ENCODE measurements at regions of chr13 and their contacts with region 1.

Region 1: DNA sequence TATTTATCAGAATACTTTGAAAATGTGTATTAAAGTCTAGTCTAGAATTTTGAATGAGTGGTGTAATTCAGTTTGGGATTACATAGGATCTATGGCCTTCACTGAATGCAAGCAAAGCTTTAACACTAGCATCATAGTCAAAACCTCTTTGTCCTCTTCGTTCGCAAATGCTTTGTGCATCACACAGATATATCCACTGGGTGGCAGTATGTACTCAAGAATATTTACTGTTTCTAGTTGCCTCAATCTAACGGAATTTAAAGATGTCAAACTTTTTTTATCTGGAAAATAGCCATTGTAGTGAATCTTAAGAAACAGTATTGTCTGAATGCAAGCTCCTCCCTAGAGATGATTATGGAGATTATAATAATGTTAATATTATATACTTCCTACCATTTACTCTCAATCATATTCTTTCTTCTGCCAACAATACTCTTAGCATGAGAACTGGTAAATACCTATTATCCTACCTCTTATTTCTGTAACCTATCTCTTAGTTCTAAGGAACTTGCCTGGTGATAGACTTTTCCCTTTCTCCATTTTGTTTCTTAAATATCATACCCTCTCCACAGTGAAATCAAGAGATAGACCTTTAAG is 25.8 kb downstream of the LACC1 start:
- DNase-seq: peak in 7 of 9 donors; percentile 21 to 61 (median 48)
- ATAC-seq: peak; percentile 85
- H3K4me3 ChIP-seq: no peak overlapping the region
- H3K4me3 Mint-ChIP-seq: no peak overlapping the region
- H3K27ac ChIP-seq: no peak overlapping the region
- H3K27ac Mint-ChIP-seq: no peak overlapping the region
- H3K4me1 ChIP-seq: no peaks in the 10 kb centered on the region
- H3K4me1 Mint-ChIP-seq: peaks cover 0 to 6% (median 3%) of the 10 kb centered on the region in 7 donors
- H3K27me3 ChIP-seq: no peaks in the 10 kb centered on the region
- H3K27me3 Mint-ChIP-seq: peaks cover 13 to 35% (median 18%) of the 10 kb centered on the region in 5 donors

Region 2: DNA sequence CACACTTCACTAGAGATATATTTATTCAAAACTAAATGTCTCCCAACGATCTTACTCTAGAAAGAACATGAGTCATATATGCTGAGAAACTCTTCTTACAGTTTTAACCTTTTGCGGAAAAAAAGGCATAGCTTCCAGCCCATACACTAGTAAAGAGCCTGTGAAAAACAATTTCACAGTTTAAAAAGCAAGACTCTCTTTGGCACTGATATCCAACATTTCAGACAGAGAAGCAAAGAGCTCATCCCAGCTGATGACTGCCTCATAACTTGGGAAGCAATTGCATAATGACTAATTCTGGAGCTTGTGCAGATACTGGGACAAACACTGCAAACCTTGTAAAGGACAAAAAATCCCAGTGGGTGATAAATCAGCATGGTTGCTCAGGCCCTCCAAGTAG is 206.8 kb before region 1 on chr13:
- CTCF ChIA-PET with region 1: no interaction called
- POLR2A ChIA-PET with region 1: no interaction called
- intact Hi-C with region 1: no loop called
- DNase-seq: no peak
- ATAC-seq: no peak
- H3K4me3 ChIP-seq: no peak overlapping the region
- H3K4me3 Mint-ChIP-seq: no peak overlapping the region
- H3K27ac ChIP-seq: no peak overlapping the region
- H3K27ac Mint-ChIP-seq: no peak overlapping the region
- H3K4me1 ChIP-seq: no peaks in the 10 kb centered on the region
- H3K4me1 Mint-ChIP-seq: no peaks in the 10 kb centered on the region
- H3K27me3 ChIP-seq: no peaks in the 10 kb centered on the region
- H3K27me3 Mint-ChIP-seq: peaks cover 7 to 36% (median 29%) of the 10 kb centered on the region in 5 donors

Region 3: DNA sequence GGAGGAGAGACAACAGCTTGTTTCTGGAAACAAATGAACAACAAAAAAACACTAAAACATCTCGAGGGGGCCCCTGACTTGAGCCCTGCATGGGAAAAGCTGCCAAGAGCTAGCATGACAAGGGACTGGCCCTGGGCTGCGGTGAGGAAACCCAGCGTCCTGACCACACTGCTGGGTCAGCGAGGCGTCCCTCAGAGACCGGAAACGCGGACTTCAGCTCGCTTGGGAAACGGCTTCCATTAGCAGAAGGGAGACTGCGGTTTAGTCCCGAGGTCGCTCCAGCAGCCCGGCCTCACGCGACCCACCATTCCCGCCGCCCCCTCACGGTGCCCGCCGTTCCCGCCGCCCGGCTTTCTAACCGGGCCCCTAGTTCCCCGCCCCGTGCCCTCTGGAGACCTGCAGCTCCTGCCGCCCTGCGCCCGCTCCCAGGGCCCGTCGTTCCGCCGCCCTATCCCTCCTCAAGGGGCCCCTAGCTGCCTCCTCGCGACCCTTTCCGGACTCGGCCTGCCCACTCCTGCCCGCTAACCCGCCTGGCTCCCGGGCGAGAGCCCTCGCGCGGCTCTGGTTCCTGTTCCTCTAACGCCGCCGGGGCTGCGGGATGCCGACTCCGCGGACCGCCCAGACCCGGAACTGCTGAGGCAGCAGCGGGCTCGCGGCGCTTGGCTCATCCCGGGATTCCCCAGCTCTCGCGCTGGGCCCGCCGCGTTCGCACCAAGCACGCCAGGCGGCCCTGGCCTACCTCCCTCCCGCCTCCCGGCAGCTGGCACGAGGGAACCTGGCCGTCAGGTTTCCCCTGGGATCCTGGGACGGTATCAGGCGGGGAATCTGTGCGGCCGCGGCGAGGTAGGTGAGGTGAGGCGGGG is 26.4 kb before region 1 on chr13 and contains the start of gene CCDC122:
- CTCF ChIA-PET with region 1: interaction called, 4 read pairs
- POLR2A ChIA-PET with region 1: no interaction called
- intact Hi-C with region 1: loop called in 1 of 2 experiments (anchors 1 kb)
- DNase-seq: peak; percentile 44 to 81 (median 65)
- ATAC-seq: peak; percentile 91
- H3K4me3 ChIP-seq: peak within 1 kb of the TSS; percentile 60
- H3K4me3 Mint-ChIP-seq: peak within 1 kb of the TSS; percentile 82 to 93 (median 90)
- H3K27ac ChIP-seq: peak within 1 kb of the TSS; percentile 72
- H3K27ac Mint-ChIP-seq: peak within 1 kb of the TSS; percentile 53 to 90 (median 81)
- H3K4me1 ChIP-seq: peaks cover 0 to 9% of the 10 kb centered on the region in 2 donors
- H3K4me1 Mint-ChIP-seq: peaks cover 15 to 27% (median 23%) of the 10 kb centered on the region in 7 donors
- H3K27me3 ChIP-seq: no peaks in the 10 kb centered on the region
- H3K27me3 Mint-ChIP-seq: peaks cover 0 to 33% (median 3%) of the 10 kb centered on the region in 5 donors
- total RNA-seq, gene CCDC122: 1.1 to 2.3 (median 1.4) TPM

Region 4: DNA sequence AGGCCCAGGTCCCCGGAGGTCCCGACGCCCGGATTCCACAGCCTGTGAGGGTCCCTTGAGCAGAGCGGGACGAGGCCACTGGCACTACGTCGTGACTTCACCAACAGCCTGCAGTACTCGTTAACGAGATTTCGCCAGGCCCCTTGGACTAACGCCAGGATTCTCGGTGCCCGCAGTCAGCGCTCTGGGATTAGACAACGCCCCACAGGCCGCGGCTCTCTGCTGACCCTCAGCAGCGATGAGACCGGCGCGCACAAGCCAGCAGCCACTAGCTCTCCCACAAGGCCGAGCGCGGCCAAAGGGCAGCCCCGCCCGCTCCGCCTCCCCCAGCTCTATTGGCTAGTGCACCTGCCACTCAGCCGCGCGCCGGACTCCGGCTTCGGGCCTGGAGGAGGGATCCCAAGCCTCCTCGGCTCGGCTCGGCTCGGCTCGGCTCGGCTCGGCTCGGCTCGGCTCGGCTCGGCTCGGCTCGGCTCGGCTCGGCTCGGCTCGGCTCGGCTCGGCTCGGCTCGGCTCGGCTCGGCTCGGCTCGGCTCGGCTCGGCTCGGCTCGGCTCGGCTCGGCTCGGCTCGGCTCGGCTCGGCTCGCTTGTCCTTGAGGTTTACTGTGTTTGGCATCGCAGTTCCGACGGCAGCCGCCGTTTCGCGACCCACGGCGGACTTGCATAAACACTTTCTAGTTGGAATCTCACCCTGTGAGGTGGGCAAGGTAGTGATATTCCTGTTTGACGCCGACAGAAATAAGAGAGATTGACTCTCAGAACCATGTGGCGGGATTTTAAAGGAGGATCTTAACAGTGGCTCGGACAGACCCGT is 236.4 kb after region 1 on chr13:
- CTCF ChIA-PET with region 1: no interaction called
- POLR2A ChIA-PET with region 1: no interaction called
- intact Hi-C with region 1: loop called in 1 of 2 experiments (anchors 5 kb)
- DNase-seq: peak; percentile 81 to 99 (median 88)
- ATAC-seq: peak; percentile 99
- H3K4me3 ChIP-seq: peak overlapping the region; percentile 89
- H3K4me3 Mint-ChIP-seq: peak overlapping the region; percentile 84 to 97 (median 92)
- H3K27ac ChIP-seq: peak overlapping the region; percentile 82
- H3K27ac Mint-ChIP-seq: peak overlapping the region; percentile 76 to 98 (median 95)
- H3K4me1 ChIP-seq: peaks cover 5% of the 10 kb centered on the region in 2 donors
- H3K4me1 Mint-ChIP-seq: peaks cover 6 to 23% (median 17%) of the 10 kb centered on the region in 7 donors
- H3K27me3 ChIP-seq: peaks cover 0 to 3% of the 10 kb centered on the region in 2 donors
- H3K27me3 Mint-ChIP-seq: peaks cover 0 to 51% (median 7%) of the 10 kb centered on the region in 5 donors

Region 5: DNA sequence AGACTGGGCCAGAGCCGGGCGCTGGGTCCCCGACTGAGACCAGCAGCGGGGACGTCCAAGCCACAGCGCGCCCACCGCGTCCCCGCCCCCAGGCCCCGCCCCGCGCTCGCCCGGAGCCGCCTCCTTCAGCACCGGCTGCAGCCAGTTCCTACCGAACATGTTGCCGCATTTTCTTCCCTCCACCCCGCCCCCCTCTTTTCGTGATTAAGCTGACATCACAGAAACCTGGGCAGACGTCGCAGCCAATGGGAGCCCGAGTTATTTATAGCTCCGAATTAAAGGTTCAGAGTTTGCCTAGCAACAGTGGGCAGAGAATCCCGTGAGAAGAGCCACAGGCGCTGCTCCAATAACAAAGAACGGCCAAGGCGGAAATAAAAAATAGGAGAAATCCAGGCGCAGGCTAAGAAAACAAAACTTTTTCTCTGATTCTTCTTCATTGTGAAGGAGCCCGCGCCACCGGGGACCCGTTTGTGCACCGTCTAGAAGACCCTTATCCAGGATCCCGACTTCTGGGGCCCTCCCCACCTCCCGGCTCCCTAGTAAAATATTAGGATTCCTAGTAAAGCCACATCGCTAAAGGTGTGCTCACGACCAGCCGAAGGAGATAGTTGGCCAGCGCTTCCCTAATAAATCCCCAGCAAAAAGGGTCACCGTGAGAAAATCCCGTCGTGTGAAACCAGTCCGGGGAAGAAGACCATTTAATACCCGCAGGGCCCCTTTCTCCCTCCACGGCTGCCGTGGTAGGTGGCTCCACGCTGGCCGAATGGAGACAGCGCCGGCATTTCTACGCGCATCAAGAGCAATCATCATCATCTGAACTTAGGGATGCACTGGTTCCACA is 529.8 kb after region 1 on chr13:
- CTCF ChIA-PET with region 1: interaction called, 54 read pairs
- POLR2A ChIA-PET with region 1: no interaction called
- intact Hi-C with region 1: loop called (anchors 1 kb)
- DNase-seq: peak; percentile 58 to 94 (median 78)
- ATAC-seq: peak; percentile 91
- H3K4me3 ChIP-seq: peak overlapping the region; percentile 65
- H3K4me3 Mint-ChIP-seq: peak overlapping the region; percentile 85 to 94 (median 90)
- H3K27ac ChIP-seq: peak overlapping the region; percentile 75
- H3K27ac Mint-ChIP-seq: peak overlapping the region; percentile 21 to 93 (median 83)
- H3K4me1 ChIP-seq: peaks cover 13 to 14% of the 10 kb centered on the region in 2 donors
- H3K4me1 Mint-ChIP-seq: peaks cover 14 to 34% (median 27%) of the 10 kb centered on the region in 7 donors
- H3K27me3 ChIP-seq: peaks cover 0 to 3% of the 10 kb centered on the region in 2 donors
- H3K27me3 Mint-ChIP-seq: peaks cover 6 to 73% (median 9%) of the 10 kb centered on the region in 5 donors

Region 6: GRCh38 chr13:44879463-44880058 is 974.0 kb after region 1 on chr13:
- CTCF ChIA-PET with region 1: no interaction called
- POLR2A ChIA-PET with region 1: no interaction called
- intact Hi-C with region 1: loop called in 1 of 2 experiments (anchors 5 kb)
- DNase-seq: peak in 1 of 9 donors; percentile 4
- ATAC-seq: no peak
- H3K4me3 ChIP-seq: no peak overlapping the region
- H3K4me3 Mint-ChIP-seq: no peak overlapping the region
- H3K27ac ChIP-seq: no peak overlapping the region
- H3K27ac Mint-ChIP-seq: no peak overlapping the region
- H3K4me1 ChIP-seq: no peaks in the 10 kb centered on the region
- H3K4me1 Mint-ChIP-seq: no peaks in the 10 kb centered on the region
- H3K27me3 ChIP-seq: no peaks in the 10 kb centered on the region
- H3K27me3 Mint-ChIP-seq: peaks cover 9 to 14% (median 10%) of the 10 kb centered on the region in 5 donors

Region 7: GRCh38 chr13:45021250-45021649 is 1115.7 kb after region 1 on chr13:
- CTCF ChIA-PET with region 1: no interaction called
- POLR2A ChIA-PET with region 1: no interaction called
- intact Hi-C with region 1: no loop called
- DNase-seq: no peak
- ATAC-seq: no peak
- H3K4me3 ChIP-seq: no peak overlapping the region
- H3K4me3 Mint-ChIP-seq: no peak overlapping the region
- H3K27ac ChIP-seq: no peak overlapping the region
- H3K27ac Mint-ChIP-seq: no peak overlapping the region
- H3K4me1 ChIP-seq: no peaks in the 10 kb centered on the region
- H3K4me1 Mint-ChIP-seq: no peaks in the 10 kb centered on the region
- H3K27me3 ChIP-seq: no peaks in the 10 kb centered on the region
- H3K27me3 Mint-ChIP-seq: no peaks in the 10 kb centered on the region